ENCODE measurements at regions of chr6 and their contacts with region 1.

Region 1: DNA sequence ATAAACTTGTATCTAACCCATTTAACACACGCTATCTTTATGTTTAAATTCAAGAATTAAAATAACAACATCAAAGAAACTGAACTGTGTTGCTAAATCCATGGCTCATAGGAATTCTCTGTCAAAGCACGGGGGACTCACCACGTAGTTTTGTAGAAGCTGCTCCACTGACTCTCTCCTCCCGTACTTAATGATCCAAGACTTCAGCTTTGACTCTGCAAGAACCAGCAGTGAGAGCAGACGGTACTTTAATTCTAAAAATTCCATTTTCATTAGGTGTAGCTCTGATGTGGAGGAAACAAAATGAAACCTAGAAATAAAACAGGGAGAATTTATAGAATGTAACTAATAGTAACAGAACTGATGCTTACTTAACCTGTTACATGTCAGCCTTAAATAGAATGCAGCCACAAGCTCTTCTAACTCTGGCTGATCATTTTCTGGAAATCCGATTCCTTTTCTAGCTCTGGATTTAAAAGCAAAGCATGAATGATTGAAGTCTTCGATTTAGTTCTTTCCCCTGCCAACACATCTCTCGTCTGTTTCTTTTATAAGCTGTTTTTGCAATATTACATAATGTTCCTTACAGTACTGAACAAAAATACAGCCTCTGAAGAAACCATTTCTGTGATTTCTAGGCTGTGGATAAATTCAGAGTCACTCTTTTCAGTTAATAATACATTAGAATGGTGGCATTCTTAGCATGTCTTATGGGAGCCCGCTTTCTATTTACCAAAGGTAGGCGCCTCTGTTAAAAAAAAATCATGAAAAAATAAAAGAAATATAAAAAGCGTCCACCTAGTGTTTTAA is 165.5 kb downstream of the SYNE1 start:
- DNase-seq: no peak

Region 2: DNA sequence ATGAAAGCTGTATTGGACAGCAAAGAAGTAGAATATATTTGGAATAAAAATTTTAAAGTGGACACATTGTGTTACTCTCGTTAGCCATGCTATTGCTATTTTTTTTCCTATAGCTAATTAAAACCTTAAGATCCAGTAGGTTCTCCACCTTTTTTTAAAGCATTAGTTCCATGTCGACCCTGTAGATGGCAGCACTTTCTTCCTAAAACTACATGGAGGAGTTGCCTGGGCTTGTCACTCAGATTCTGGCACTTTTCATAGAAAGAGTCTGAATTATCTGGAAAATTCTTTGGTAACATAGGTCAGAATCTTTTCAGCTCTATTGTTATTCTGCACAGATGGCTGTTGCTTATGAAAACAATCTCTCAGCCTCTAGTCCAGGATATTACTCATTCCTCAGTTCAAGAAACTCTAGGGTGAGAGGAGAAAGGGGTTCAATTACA is 706.2 kb before region 1 on chr6:
- intact Hi-C with region 1: no loop called
- DNase-seq: peak in 25 of 42 donors; percentile 16 to 81 (median 54)

Region 3: DNA sequence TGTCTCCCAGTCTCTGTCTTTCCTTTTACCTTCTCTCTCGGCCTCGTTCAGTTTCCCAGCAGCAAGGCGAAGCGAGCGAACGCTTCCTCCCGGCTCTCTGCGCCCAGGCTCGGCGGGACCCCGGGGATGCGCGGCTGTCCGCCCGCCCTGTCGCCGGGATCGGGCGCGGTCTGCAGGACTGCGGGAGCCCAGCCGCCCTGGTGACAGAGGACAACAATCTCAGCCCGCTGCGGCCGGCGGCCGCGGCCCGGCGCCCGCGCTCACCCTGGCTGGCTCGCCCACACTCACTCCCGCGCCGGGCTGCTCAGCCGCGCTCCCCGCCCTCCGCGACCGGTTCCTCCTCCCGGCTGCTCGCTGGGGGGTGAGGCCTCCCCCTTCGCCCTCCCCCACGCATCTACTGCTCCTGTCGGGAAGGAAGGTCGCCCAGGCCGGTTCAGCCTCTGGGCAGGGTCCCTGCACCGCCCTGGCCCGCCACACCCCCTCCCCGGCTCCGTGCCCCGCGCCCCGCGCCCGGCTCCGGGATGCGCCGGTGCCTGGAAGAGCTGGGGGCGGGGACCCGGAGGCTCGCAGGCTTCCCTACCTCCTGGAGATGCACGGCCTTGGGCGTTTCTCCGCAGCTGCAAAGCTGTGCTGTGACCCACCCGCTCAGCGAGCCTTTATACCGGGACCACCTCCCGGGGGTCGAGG is 165.1 kb after region 1 on chr6:
- intact Hi-C with region 1: loop called (anchors 5 kb)
- DNase-seq: peak in 41 of 42 donors; percentile 17 to 81 (median 57)

Measured in head of caudate nucleus (tissue), 42 donors.